Left colon (tissue), 2 donors: ENCODE measurements at regions of chr14 and their contacts with region 1.

Region 1: GRCh38 chr14:99518441-99519346 is 37.5 kb downstream of the CCNK start:
- DNase-seq: peak; percentile 58 to 86
- ATAC-seq: peak; percentile 78

Region 2: DNA sequence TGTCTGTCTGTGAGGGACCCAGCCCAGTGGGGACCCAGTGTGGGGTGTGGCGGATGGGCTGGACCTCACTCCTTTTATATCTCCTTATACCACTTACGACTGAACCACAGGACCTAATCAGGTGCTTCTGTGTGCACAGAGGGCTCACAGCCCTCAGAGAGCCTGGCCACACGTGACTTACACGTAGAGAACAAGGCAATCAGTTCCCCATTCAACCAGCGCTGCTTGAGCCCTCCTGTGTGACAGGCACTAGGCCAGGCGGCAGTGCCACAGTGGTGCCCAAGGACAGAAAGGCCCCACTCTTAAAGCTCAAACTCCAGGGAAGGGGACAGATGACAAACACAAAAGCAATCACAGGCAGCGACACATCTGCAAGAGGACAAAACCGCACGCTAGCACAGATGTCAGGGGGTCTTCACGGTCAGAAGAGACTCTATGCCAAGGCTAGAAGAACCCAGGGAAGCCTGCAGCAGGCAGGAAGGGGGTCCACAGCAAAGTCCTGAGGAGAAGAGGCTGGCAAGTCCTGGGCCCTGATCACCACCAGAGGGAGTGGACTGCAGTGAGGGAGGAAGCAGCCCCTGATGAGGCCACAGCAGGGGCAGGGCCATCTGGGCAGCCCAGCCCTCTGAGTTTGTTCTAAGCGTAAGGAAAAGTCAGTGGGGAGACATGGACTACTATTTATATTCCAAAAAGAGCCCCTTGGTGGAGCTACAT is 77.4 kb before region 1 on chr14:
- intact Hi-C with region 1: no loop called
- DNase-seq: no peak
- ATAC-seq: peak; percentile 22

Region 3: GRCh38 chr14:99628832-99629618 is 110.3 kb after region 1 on chr14:
- intact Hi-C with region 1: loop called (anchors 2 to 10 kb)
- DNase-seq: peak; percentile 60 to 81
- ATAC-seq: peak; percentile 95